KBM-7 (cell line): ENCODE measurements at regions of chr2 and their contacts with region 1.

Region 1: DNA sequence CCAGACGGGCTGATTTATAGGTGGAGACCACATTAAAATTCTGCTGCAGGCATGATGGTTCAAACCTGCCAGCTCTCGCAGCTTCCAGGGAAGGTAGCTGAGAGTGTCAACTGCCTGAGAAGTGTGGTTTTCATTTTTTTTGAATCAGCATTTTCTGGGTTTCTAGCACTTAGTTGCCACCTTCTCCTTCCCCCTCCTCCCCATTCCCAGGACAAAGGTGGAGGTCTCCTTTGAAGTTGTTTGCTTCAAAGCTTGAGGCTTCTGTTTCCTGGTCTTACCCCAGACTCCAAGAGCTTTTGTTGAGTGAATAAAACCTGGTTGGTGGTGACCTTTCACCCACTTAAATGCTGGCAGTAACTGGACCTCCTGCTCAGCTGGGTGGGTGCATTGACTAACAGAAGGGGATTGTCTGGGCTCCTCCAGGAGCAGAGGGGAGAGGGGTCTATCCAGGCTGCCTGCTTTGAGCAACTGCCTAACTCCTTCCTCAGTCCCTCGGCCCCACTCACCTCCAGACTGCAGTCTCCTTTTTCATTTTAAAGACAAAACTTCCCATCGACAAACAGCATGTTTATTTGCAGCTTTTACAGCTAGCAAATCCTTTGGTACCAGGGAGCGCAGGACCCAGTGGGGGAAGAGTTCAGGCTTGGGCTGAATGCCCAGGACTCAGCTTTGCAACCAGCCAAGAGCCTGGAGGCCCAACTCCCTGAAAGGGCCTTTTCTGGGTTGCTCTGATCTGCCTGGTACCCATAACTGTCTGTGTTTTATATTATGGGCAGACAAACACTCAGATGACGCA is 3.5 kb downstream of the RHOB start:
- DNase-seq: no peak

Region 2: GRCh38 chr2:19823507-19823906 is 626.9 kb before region 1 on chr2:
- in situ Hi-C with region 1: no loop called
- DNase-seq: no peak

Region 3: GRCh38 chr2:20635675-20636584 is 185.5 kb after region 1 on chr2:
- in situ Hi-C with region 1: loop called (anchors 10 kb)
- DNase-seq: peak; percentile 78